AG04450 (cell line): ENCODE measurements at regions of chr17 and their contacts with region 1.

Region 1: DNA sequence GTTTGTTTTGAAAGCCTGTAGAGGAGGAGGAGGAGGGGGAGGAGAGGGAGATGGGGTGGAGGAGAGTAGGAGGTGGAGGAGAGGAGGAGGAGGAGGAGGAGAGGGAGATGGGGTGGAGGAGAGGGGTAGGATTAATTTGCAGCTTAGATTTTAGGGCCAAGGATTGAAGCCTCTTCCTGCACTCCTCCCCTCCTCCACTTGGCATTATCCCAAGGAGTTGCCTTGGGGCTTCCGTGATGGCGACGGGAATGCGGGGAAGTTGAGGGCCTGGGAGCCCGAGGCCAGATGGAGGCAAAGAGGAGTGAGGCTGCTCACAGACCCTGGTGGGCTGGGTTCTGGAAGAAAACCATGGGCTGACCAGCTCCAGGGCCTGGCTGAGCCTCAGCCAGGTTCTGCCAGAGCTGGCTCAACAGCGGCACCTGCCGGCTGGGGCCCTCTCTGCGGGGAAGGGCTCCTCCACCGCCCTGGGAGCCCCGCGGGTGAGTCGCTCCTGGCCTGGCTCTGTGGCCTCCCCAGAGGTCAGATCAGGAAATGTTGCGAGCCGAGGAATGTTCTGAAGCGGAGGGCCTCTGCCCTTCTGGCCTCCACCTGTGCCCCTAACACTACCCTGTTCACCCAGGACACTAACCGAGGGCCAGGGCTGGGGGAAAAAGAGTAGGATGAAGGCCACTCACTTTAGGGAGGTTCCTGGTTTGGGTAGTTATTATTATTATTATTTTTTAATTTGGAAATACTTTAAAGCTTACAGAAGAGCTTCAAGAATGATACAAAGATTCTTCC is 23.9 kb upstream of the FMNL1 start:
- DNase-seq: peak; percentile 72
- H3K4me3 ChIP-seq: no peak overlapping the region; the same call in 1 of the 2 replicates
- H3K27ac ChIP-seq: peak overlapping the region; percentile 2
- H3K27me3 ChIP-seq: no peaks in the 10 kb centered on the region
- CTCF ChIP-seq: peak; percentile 99

Region 2: DNA sequence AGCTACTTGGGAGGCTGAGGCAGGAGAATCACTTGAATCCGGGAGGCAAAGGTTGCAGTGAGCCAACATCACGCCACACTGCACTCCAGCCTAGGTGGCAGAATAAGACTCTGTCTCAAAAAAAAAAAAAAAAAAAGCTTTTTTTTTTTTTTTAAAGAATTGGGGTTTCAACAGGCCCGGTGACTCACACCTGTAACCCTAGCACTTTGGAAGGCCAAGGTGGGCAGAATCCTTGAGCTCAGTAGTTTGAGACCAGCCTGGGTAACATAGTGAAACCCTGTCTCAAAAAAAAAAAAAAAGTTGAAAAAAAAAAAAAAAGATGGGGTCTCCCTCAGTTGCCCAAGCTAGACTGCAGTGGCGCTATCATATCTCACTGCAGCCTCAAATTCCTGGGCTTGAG is 42.7 kb before region 1 on chr17:
- CTCF ChIA-PET with region 1: interaction called, 154 read pairs
- POLR2A ChIA-PET with region 1: interaction called, 104 read pairs
- DNase-seq: no peak
- H3K4me3 ChIP-seq: no peak overlapping the region
- H3K27ac ChIP-seq: no peak overlapping the region
- H3K27me3 ChIP-seq: no peaks in the 10 kb centered on the region
- CTCF ChIP-seq: no peak

Region 3: GRCh38 chr17:45161019-45161825 is 36.5 kb before region 1 on chr17:
- CTCF ChIA-PET with region 1: interaction called, 31 read pairs
- POLR2A ChIA-PET with region 1: interaction called, 21 read pairs
- DNase-seq: peak; percentile 100
- H3K4me3 ChIP-seq: peak overlapping the region; percentile 90
- H3K27ac ChIP-seq: peak overlapping the region; percentile 97
- H3K27me3 ChIP-seq: no peaks in the 10 kb centered on the region
- CTCF ChIP-seq: no peak

Region 4: GRCh38 chr17:45172454-45173286 is 25.1 kb before region 1 on chr17:
- CTCF ChIA-PET with region 1: interaction called, 22 read pairs
- POLR2A ChIA-PET with region 1: interaction called, 4 read pairs
- DNase-seq: no peak
- H3K4me3 ChIP-seq: 0 out of 2 replicates have a peak overlapping the region, but pooled peaks have one; percentile 10
- H3K27ac ChIP-seq: peak overlapping the region; percentile 75
- H3K27me3 ChIP-seq: no peaks in the 10 kb centered on the region
- CTCF ChIP-seq: no peak

Region 5: DNA sequence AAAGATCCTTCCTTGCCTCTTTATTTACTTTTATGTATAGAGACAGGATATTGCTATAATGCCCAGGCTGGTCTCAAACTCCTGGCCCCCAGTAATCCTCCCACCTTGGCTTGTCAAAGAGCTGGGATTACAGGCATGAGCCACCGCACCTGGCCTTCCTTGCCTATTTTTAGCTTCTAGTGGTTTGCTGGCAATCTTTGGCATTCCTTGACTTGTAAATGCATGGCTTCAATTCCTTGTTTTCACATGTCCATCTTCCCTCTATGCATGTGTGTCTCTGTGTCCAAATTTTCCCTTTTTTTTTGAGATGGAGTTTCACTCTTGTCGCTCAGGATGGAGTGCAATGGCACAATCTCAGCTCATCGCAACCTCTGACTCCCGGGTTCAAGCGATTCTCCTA is 13.6 kb before region 1 on chr17:
- CTCF ChIA-PET with region 1: interaction called, 16 read pairs
- POLR2A ChIA-PET with region 1: no interaction called
- DNase-seq: no peak
- H3K4me3 ChIP-seq: no peak overlapping the region
- H3K27ac ChIP-seq: no peak overlapping the region
- H3K27me3 ChIP-seq: no peaks in the 10 kb centered on the region
- CTCF ChIP-seq: no peak

Region 6: DNA sequence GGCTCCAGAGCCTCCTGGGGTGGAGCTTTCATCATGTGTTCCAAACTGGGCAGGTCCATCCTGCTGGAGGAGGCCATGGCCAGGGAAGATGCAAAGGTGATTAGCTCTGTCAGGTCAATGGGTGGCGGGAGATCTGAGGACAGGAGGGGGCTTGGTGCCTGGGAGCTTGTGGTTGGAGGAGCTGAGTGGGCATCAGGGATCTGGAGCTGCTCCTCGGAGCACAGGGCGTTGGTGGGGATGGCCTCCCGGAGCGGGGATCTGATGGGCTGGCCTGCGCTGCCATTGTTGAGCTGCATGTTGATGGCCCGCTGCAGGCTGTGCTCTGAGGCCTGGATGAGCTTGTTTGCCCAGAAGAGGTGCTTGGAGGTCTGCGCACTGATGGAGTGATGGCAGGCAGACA is 57.6 kb after region 1 on chr17:
- CTCF ChIA-PET with region 1: no interaction called
- POLR2A ChIA-PET with region 1: no interaction called
- DNase-seq: no peak
- H3K4me3 ChIP-seq: no peak overlapping the region
- H3K27ac ChIP-seq: no peak overlapping the region
- H3K27me3 ChIP-seq: peaks cover 5% of the 10 kb centered on the region
- CTCF ChIP-seq: no peak

Region 7: GRCh38 chr17:45307290-45308015 is 109.7 kb after region 1 on chr17:
- CTCF ChIA-PET with region 1: no interaction called
- POLR2A ChIA-PET with region 1: no interaction called
- DNase-seq: peak; percentile 53
- H3K4me3 ChIP-seq: no peak overlapping the region
- H3K27ac ChIP-seq: peak overlapping the region; percentile 89
- H3K27me3 ChIP-seq: no peaks in the 10 kb centered on the region
- CTCF ChIP-seq: no peak